Esophagus muscularis mucosa (tissue), 4 donors: ENCODE measurements at regions of chr17 and their contacts with region 1.

Region 1: DNA sequence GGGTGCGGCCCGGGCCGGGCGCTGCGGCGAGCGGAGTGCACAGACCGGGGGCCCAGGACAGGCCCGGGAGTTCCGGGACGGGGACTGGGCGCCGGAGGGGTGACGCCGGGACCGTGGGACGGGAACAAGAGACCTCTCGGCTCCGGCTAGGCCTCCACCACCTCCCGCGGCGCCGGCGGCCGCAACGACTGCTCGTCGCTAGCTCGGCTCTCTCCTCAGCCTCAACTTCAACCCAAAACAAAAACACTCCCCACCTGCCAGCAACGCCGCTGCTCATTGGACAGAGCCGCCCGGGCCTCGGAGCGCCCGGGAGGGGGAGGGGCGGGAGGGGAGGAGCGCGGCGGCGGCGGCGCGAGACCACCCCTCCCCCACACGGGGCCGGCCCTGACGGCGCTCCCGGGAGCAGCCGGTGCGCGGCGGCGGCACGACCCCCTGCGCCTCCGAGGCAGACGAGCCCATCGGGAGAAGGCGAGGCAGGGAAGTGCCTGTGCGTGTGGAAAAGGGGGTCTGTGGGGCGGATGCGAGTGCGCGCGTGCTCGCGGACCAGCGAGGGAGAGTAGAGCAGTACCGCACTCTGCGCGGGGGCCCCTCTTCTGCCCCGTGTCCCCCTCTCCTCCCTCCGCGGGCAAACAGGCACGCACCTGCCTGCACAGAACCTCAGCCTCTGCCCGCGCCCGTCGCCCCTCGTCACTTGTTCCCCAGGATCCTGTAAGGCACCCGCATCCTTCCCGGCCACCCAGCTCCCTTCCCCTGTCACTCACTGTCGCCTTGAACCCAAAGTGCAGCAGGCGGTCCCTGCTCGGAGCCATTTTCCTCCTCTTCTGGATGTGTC is at the start of gene FBXL20:
- DNase-seq: peak; percentile 98
- H3K4me3 ChIP-seq: peak within 1 kb of the TSS; percentile 76 to 96 (median 94)
- H3K27ac ChIP-seq: peak within 1 kb of the TSS; percentile 91 to 94 (median 92)
- H3K4me1 ChIP-seq: peaks cover 26 to 43% (median 27%) of the 10 kb centered on the region in 4 donors
- H3K27me3 ChIP-seq: no peaks in the 10 kb centered on the region
- CTCF ChIP-seq: no peak
- EP300 ChIP-seq: no peak
- POLR2A ChIP-seq: peak; percentile 81
- total RNA-seq, gene FBXL20: 13.1 to 19.6 (median 17.2) TPM

Region 2: DNA sequence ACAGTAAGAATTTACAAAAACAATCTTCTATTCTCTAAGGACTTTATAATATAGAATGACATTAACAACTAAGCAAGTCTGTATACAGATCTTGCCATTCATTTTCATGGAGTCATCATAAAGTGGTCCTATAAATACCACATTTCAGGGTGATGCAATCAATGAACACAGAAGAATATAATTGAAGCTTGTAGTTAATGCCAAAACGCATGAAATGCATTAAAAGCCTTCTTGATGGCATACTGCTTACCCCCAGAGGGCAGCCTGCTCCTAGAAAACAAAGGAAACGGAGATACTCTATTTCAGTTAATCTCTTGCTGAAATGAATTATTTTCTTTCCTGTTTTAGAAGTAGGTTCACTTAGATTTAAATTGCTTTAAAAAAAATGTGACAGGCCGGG is 130.7 kb before region 1 on chr17:
- intact Hi-C with region 1: loop called (anchors 10 kb)
- DNase-seq: no peak
- H3K4me3 ChIP-seq: no peak overlapping the region
- H3K27ac ChIP-seq: no peak overlapping the region
- H3K4me1 ChIP-seq: no peaks in the 10 kb centered on the region
- H3K27me3 ChIP-seq: no peaks in the 10 kb centered on the region
- CTCF ChIP-seq: peak in 2 of 3 experiments; percentile 12 to 20
- EP300 ChIP-seq: no peak
- POLR2A ChIP-seq: no peak

Region 3: DNA sequence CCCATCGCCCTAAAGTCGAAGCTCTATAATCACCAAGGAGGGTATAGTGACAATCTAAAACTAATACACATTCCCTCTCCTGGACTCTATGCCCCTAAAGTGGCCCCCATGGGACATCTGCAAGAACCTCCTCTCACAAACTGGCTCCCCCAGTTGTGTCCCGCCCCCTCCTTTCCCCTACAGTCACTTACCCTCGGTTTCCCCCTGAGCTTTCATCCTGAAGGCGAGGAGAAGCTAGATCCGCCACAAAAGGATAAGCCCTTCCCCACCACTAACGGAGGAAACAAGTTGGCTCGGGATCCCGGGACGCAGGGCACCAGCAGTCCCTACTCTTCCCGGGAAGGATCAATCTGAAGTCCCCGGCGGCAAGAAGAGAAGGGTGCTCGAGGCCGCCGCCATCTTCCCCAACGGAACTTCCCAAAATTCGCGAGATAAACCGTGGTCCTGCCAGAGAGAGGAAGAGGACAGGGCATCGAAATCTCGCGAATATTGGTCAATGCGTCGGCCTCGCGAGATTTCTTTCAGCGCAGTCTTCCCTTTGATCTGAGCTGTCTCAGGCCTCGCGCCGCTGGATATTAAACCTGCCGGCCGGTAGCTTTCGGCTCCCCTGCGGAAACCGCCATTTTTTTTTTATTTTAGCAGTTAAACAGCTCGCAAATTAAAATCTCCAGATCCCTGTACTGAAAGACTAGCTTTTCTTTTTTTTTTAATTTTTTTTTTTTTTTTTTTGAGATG is 49.4 kb after region 1 on chr17 and contains the start of gene MED1:
- intact Hi-C with region 1: loop called (anchors 5 kb)
- DNase-seq: peak; percentile 97
- H3K4me3 ChIP-seq: peak within 1 kb of the TSS; percentile 75 to 97 (median 88)
- H3K27ac ChIP-seq: peak within 1 kb of the TSS; percentile 80 to 89 (median 86)
- H3K4me1 ChIP-seq: peaks cover 12 to 32% (median 29%) of the 10 kb centered on the region in 4 donors
- H3K27me3 ChIP-seq: no peaks in the 10 kb centered on the region
- CTCF ChIP-seq: peak in 1 of 3 experiments; percentile 4
- EP300 ChIP-seq: no peak
- POLR2A ChIP-seq: peak; percentile 35
- total RNA-seq, gene MED1: 19.5 to 33.9 (median 27.2) TPM

Region 4: DNA sequence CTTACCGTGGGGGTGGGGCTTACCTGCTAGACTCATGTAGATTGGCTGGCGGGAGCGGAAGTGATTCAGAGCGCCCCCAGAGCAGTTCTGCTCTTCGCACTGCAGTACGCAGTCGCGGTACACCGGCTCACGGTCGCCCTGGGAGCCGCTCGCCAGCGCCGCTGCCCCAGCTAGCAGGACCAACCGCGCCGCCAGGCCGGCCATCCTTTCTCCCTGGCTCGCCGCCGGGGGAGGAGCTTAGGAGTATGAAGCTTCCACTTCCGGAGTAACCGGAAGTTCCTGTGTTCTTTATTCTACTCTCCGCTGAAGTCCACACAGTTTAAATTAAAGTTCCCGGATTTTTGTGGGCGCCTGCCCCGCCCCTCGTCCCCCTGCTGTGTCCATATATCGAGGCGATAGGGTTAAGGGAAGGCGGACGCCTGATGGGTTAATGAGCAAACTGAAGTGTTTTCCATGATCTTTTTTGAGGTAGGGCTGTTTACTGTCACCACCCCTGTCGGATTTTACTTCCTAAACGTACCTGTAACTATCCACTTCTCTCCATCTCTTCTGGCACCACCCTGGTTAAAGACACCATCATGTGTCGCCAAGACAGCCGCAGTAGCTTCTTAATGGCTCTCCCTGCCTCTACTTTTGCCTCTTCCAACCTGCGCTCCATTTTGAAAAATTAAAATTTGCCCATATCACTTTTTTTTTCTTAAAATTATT is 286.3 kb after region 1 on chr17 and contains the start of gene PGAP3:
- intact Hi-C with region 1: no loop called
- DNase-seq: peak; percentile 97
- H3K4me3 ChIP-seq: peak within 1 kb of the TSS; percentile 68 to 81 (median 72)
- H3K27ac ChIP-seq: peak within 1 kb of the TSS; percentile 83 to 91 (median 86)
- H3K4me1 ChIP-seq: peaks cover 11 to 22% (median 17%) of the 10 kb centered on the region in 4 donors
- H3K27me3 ChIP-seq: no peaks in the 10 kb centered on the region
- CTCF ChIP-seq: peak in 1 of 3 experiments; percentile 22
- EP300 ChIP-seq: no peak
- POLR2A ChIP-seq: no peak
- total RNA-seq, gene PGAP3: 6.2 to 9.4 (median 8.5) TPM